B cell (primary cell): ENCODE measurements at regions of chr22 and their contacts with region 1.

Region 1: DNA sequence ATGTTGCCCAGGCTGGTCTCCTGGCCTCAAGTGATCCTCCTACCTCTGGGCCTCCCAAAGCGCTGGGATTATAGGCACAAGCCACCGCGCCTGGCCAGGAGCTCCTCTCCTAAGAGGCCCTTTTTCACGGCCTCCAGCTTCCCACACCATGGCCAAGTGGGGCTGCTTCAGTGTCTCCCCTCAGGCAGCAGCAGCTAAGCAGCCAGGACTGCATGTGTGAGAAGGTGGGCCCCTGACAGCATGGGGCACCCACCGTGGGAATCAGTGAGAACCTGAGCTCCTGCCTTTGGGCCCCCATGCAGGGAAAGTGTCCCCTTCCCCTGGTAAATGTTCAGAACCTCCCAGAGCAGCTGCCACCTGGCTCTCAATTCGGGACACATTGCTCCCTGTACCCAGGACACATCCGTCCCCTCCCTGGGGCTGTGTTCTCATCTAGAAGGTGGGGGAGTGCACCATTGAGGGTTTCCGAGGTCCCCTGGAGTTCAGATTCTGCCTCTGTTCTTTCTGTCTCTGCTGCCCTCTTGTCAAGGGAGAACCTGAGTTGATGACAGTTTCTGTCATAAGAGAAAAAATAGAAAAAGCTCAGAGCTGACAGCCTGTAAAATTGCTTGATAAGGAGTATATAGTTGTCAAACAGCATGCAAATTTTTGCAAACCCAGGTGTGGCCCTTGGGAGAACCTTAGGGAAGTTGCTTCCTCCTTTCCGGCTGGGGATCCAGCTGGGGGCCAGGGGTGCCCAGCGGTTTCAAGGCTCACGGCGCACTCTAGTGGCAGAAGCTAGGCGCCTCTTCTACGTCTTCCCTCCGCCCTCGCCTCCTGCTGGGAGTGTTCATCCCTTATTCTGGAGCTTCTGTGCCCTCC is 29.7 kb downstream of the FAM83F start:
- DNase-seq: peak; percentile 77
- ATAC-seq: peak; percentile 79
- H3K4me3 ChIP-seq: no peak overlapping the region
- H3K4me3 Mint-ChIP-seq: no peak overlapping the region
- H3K27ac ChIP-seq: no peak overlapping the region
- H3K27ac Mint-ChIP-seq: no peak overlapping the region
- H3K4me1 ChIP-seq: peaks cover 7 to 8% of the 10 kb centered on the region in 2 donors
- H3K4me1 Mint-ChIP-seq: peaks cover 5% of the 10 kb centered on the region
- H3K27me3 ChIP-seq: peaks cover 0 to 3% (median 0%) of the 10 kb centered on the region in 4 experiments
- H3K27me3 Mint-ChIP-seq: peaks cover 7% of the 10 kb centered on the region
- CTCF ChIP-seq: peak; percentile 79

Region 2: GRCh38 chr22:39490135-39490798 is 534.2 kb before region 1 on chr22:
- CTCF ChIA-PET with region 1: interaction called, 44 read pairs
- POLR2A ChIA-PET with region 1: no interaction called
- intact Hi-C with region 1: no loop called
- DNase-seq: peak; percentile 86
- ATAC-seq: peak; percentile 98
- H3K4me3 ChIP-seq: peak overlapping the region in 2 of 5 experiments; percentile 12 to 37
- H3K4me3 Mint-ChIP-seq: peak overlapping the region; percentile 59
- H3K27ac ChIP-seq: no peak overlapping the region
- H3K27ac Mint-ChIP-seq: peak overlapping the region; percentile 79
- H3K4me1 ChIP-seq: peaks cover 4 to 14% of the 10 kb centered on the region in 2 donors
- H3K4me1 Mint-ChIP-seq: peaks cover 21% of the 10 kb centered on the region
- H3K27me3 ChIP-seq: no peaks in the 10 kb centered on the region
- H3K27me3 Mint-ChIP-seq: no peaks in the 10 kb centered on the region
- CTCF ChIP-seq: no peak

Region 3: DNA sequence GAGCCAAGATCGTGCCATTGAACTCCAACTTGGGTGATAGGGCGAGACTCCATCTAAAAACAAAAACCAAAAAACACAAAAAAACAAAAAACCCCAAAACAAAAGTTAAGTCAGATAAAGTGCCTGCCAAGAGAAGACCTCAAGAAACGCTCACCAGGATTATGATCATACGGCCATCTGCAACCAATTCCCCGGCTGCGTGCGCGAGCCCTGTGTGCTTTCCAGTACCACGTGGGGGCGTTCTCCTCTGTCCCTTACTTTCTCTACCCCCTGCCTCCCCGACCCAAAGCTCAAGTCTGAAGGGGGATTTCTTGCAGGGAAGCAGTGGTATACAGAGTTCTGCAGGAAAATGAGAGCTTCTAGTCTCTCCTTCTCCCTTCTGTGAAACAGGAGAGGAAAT is 481.3 kb before region 1 on chr22:
- CTCF ChIA-PET with region 1: interaction called, 328 read pairs
- POLR2A ChIA-PET with region 1: no interaction called
- intact Hi-C with region 1: no loop called
- DNase-seq: peak; percentile 51
- ATAC-seq: no peak
- H3K4me3 ChIP-seq: no peak overlapping the region
- H3K4me3 Mint-ChIP-seq: no peak overlapping the region
- H3K27ac ChIP-seq: no peak overlapping the region
- H3K27ac Mint-ChIP-seq: no peak overlapping the region
- H3K4me1 ChIP-seq: peaks cover 0 to 8% of the 10 kb centered on the region in 2 donors
- H3K4me1 Mint-ChIP-seq: peaks cover 4% of the 10 kb centered on the region
- H3K27me3 ChIP-seq: peaks cover 0 to 42% (median 19%) of the 10 kb centered on the region in 4 experiments
- H3K27me3 Mint-ChIP-seq: peaks cover 44% of the 10 kb centered on the region
- CTCF ChIP-seq: peak; percentile 30

Region 4: DNA sequence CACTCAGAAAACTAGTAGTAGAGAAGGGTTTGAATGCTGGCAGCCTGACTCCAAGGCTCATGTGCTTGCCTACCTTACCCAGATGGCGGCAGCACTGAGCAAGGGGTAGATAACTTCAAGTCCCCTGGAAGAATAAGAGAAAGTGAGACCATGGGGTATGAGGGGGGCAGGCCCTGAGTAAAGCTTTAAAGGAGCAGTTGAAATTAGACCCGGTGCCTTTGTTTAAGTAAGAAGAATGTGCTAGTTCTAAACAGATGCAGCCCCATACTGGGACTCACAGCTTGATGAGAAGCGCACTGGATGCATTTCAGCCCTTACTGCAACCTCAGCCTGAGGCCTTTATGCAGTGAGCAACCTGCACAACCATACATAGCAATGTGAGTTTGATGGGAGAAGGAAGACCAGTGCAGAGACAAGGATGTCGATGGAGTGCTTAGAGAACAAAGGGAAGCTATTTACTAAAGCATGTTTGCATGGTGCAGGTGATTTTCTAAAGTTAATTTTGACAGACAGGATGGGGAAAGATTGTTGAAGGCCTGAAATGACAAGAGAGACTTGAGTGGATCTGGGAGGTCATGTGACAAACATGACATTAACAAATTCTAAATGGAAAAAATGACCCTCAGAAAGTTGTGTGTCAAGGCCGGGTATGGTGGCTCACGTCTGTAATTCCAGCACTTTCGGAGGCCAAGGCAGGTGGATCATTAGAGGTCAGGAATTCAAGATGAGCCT is 91.3 kb before region 1 on chr22:
- CTCF ChIA-PET with region 1: interaction called, 12 read pairs
- POLR2A ChIA-PET with region 1: no interaction called
- intact Hi-C with region 1: no loop called
- DNase-seq: peak; percentile 43
- ATAC-seq: no peak
- H3K4me3 ChIP-seq: no peak overlapping the region
- H3K4me3 Mint-ChIP-seq: peak overlapping the region; percentile 67
- H3K27ac ChIP-seq: peak overlapping the region in 1 of 2 donors; percentile 69
- H3K27ac Mint-ChIP-seq: peak overlapping the region; percentile 83
- H3K4me1 ChIP-seq: peaks cover 68 to 77% of the 10 kb centered on the region in 2 donors
- H3K4me1 Mint-ChIP-seq: peaks cover 56% of the 10 kb centered on the region
- H3K27me3 ChIP-seq: no peaks in the 10 kb centered on the region
- H3K27me3 Mint-ChIP-seq: no peaks in the 10 kb centered on the region
- CTCF ChIP-seq: peak; percentile 55

Region 5: GRCh38 chr22:39997939-39998338 is 26.5 kb before region 1 on chr22:
- CTCF ChIA-PET with region 1: interaction called, 11 read pairs
- POLR2A ChIA-PET with region 1: no interaction called
- intact Hi-C with region 1: no loop called
- DNase-seq: no peak
- ATAC-seq: no peak
- H3K4me3 ChIP-seq: no peak overlapping the region
- H3K4me3 Mint-ChIP-seq: no peak overlapping the region
- H3K27ac ChIP-seq: no peak overlapping the region
- H3K27ac Mint-ChIP-seq: no peak overlapping the region
- H3K4me1 ChIP-seq: peaks cover 11 to 13% of the 10 kb centered on the region in 2 donors
- H3K4me1 Mint-ChIP-seq: peaks cover 7% of the 10 kb centered on the region
- H3K27me3 ChIP-seq: peaks cover 0 to 41% (median 21%) of the 10 kb centered on the region in 4 experiments
- H3K27me3 Mint-ChIP-seq: peaks cover 47% of the 10 kb centered on the region
- CTCF ChIP-seq: no peak

Region 6: GRCh38 chr22:40044102-40044869 is 19.9 kb after region 1 on chr22:
- CTCF ChIA-PET with region 1: interaction called, 19 read pairs
- POLR2A ChIA-PET with region 1: no interaction called
- intact Hi-C with region 1: no loop called
- DNase-seq: peak; percentile 99
- ATAC-seq: peak; percentile 84
- H3K4me3 ChIP-seq: peak overlapping the region; percentile 65 to 98 (median 97)
- H3K4me3 Mint-ChIP-seq: peak overlapping the region; percentile 95
- H3K27ac ChIP-seq: peak overlapping the region; percentile 97 to 100
- H3K27ac Mint-ChIP-seq: peak overlapping the region; percentile 99
- H3K4me1 ChIP-seq: peaks cover 39 to 43% of the 10 kb centered on the region in 2 donors
- H3K4me1 Mint-ChIP-seq: peaks cover 40% of the 10 kb centered on the region
- H3K27me3 ChIP-seq: peaks cover 0 to 14% (median 2%) of the 10 kb centered on the region in 4 experiments
- H3K27me3 Mint-ChIP-seq: peaks cover 7% of the 10 kb centered on the region
- CTCF ChIP-seq: no peak